ENCODE measurements at regions of chr13 and their contacts with region 1.

Region 1: GRCh38 chr13:38349390-38350113 is at the start of gene UFM1:
- DNase-seq: peak; percentile 81
- H3K4me3 Mint-ChIP-seq: peak within 1 kb of the TSS; percentile 98
- H3K27ac Mint-ChIP-seq: peak within 1 kb of the TSS; percentile 100
- H3K4me1 Mint-ChIP-seq: peaks cover 36% of the 10 kb centered on the region
- H3K27me3 Mint-ChIP-seq: peaks cover 3% of the 10 kb centered on the region
- total RNA-seq, gene UFM1: 66.9 and 71.3 TPM in 2 replicates

Region 2: DNA sequence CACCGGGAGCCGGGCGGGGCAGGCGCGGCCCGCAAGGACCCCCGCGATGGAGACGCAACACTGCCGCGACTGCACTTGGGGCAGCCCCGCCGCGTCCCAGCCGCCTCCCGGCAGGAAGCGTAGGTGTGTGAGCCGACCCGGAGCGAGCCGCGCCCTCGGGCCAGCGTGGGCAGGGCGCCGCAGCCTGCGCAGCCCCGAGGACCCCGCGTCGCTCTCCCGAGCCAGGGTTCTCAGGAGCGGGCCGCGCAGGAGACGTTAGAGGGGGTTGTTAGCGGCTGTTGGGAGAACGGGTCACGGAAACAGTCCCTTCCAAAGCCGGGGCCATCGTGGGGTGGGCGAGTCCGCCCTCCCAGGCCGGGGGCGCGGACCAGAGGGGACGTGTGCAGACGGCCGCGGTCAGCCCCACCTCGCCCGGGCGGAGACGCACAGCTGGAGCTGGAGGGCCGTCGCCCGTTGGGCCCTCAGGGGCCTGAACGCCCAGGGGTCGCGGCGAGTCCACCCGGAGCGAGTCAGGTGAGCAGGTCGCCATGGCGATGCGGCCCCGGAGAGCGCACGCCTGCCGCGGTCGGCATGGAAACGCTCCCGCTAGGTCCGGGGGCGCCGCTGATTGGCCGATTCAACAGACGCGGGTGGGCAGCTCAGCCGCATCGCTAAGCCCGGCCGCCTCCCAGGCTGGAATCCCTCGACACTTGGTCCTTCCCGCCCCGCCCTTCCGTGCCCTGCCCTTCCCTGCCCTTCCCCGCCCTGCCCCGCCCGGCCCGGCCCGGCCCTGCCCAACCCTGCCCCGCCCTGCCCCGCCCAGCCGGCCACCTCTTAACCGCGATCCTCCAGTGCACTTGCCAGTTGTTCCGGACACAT is 1917.7 kb before region 1 on chr13 and contains the start of gene CCNA1:
- intact Hi-C with region 1: loop called (anchors 5 kb)
- DNase-seq: peak; percentile 16
- H3K4me3 Mint-ChIP-seq: peak within 1 kb of the TSS; percentile 80
- H3K27ac Mint-ChIP-seq: peak within 1 kb of the TSS; percentile 43
- H3K4me1 Mint-ChIP-seq: peaks cover 22% of the 10 kb centered on the region
- H3K27me3 Mint-ChIP-seq: peaks cover 59% of the 10 kb centered on the region
- total RNA-seq, gene CCNA1: 1.5 and 1.6 TPM in 2 replicates

Region 3: DNA sequence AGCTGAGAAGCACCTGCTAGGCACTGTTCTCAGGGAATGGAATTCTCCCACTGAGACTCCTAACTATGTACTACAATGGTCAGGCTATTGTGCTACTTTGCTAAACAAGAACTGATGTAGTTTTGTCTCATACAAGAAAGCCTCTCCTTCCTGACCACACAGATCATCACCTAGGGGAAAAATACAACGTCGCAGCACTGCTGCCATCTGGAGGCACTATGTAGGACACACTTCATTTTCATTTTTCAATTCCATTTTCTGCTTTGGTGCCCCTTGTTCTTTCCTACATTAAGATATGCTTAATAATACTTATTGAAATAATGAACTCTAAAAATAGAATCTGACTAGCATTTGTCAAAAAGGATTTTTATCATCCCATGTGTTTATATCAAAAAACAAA is 667.2 kb after region 1 on chr13:
- intact Hi-C with region 1: no loop called
- DNase-seq: no peak
- H3K4me3 Mint-ChIP-seq: no peak overlapping the region
- H3K27ac Mint-ChIP-seq: peak overlapping the region; percentile 15
- H3K4me1 Mint-ChIP-seq: peaks cover 24% of the 10 kb centered on the region
- H3K27me3 Mint-ChIP-seq: no peaks in the 10 kb centered on the region